ENCODE measurements at regions of chr17 and their contacts with region 1.

Region 1: DNA sequence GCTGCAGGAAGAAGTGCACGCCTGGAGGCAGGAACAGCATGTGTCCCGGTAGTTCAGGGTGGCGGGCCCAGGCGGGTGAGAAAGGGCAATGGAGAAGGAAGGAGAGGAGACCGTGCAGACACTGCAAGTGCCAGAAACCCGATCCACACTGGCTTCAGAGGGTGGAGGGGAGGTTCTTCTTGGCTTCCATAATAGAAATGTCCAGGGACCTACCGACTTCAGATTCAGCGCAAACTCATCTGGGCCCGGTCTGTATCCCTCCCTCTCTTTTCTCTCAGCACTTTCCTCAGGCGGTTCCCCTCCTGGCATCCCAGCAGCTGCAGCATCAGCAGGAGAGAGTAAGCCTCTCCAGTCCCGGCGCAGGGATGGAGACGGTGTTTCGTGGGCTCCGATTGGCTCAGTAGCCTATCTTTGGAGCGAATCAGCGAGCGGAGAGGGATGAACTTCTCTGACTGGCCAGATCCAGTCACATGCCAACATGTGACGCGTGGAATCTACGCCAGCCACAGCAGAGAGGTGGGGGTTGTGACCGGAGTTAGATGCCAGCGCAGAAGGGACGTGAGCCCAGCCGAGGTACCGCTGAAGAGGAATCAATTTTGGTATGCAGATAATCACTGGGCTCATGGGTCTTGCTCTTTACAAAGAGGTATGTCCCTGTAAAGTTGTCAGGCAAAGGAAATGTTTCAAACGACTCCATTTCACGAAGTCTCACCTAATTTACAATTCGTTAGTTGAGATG is 1.9 kb upstream of the PRPSAP2 start:
- DNase-seq: peak; percentile 95
- ATAC-seq: peak; percentile 83
- H3K4me3 Mint-ChIP-seq: peak overlapping the region; percentile 83
- H3K27ac Mint-ChIP-seq: peak overlapping the region; percentile 87
- H3K4me1 Mint-ChIP-seq: peaks cover 31% of the 10 kb centered on the region
- H3K27me3 Mint-ChIP-seq: no peaks in the 10 kb centered on the region
- CTCF ChIP-seq: no peak

Region 2: DNA sequence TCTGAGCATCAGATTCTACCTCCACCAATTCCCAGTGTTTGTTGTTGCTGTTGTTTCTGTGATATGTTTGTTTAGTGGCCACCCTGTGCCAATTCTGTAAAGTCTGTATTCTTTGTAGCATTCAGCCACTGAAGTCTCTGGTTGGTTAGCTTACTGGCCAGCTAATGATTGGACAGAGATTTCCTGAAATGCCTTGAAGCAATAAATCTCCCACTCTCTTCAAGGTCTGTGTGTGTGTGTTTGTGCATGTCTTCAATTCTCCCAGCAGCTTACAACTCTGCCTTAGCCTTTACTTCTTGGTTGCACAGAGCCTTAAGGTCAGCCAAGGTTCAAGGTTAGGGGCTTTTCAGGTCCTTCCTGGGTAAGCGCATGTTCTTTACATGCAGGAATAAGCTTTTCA is 40.1 kb after region 1 on chr17:
- CTCF ChIA-PET with region 1: no interaction called
- POLR2A ChIA-PET with region 1: interaction called, 5 read pairs
- intact Hi-C with region 1: loop called (anchors 2 kb)
- DNase-seq: no peak
- ATAC-seq: no peak
- H3K4me3 Mint-ChIP-seq: no peak overlapping the region
- H3K27ac Mint-ChIP-seq: no peak overlapping the region
- H3K4me1 Mint-ChIP-seq: peaks cover 30% of the 10 kb centered on the region
- H3K27me3 Mint-ChIP-seq: no peaks in the 10 kb centered on the region
- CTCF ChIP-seq: no peak

Region 3: DNA sequence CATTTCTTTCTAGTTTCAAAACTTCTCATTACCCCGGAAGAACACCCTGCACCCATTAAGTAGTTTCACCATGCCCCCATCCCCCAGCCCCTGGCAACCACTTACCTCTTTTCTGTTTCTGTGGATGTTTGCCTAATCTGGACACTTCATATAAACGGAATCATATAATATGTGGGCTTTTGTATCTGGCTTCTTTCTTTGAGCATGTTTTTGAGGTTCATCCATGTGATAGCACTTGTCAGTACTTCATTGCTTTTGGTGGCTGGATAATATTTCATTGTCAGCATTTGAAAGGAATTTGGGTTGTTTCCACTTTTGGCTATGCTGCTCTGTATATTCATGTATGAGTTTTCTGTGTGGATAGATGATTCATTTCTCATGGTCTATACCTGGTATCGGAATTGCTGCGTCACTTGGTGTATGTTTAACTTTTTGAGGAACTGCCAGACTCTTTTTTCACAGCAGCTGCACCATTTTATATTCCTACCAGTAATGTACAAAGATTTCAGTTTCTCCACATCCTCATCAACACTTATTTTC is 66.0 kb after region 1 on chr17:
- CTCF ChIA-PET with region 1: interaction called, 3 read pairs
- POLR2A ChIA-PET with region 1: interaction called, 3 read pairs
- intact Hi-C with region 1: loop called (anchors 5 kb)
- DNase-seq: peak; percentile 74
- ATAC-seq: peak; percentile 64
- H3K4me3 Mint-ChIP-seq: peak overlapping the region; percentile 13
- H3K27ac Mint-ChIP-seq: peak overlapping the region; percentile 86
- H3K4me1 Mint-ChIP-seq: peaks cover 68% of the 10 kb centered on the region
- H3K27me3 Mint-ChIP-seq: no peaks in the 10 kb centered on the region
- CTCF ChIP-seq: no peak

Measured in activated CD8-positive, alpha-beta T cell treated with anti-CD3 and anti-CD28 coated beads for 36 hours (primary cell).